G401 (cell line): ENCODE measurements at regions of chr9 and their contacts with region 1.

Region 1: DNA sequence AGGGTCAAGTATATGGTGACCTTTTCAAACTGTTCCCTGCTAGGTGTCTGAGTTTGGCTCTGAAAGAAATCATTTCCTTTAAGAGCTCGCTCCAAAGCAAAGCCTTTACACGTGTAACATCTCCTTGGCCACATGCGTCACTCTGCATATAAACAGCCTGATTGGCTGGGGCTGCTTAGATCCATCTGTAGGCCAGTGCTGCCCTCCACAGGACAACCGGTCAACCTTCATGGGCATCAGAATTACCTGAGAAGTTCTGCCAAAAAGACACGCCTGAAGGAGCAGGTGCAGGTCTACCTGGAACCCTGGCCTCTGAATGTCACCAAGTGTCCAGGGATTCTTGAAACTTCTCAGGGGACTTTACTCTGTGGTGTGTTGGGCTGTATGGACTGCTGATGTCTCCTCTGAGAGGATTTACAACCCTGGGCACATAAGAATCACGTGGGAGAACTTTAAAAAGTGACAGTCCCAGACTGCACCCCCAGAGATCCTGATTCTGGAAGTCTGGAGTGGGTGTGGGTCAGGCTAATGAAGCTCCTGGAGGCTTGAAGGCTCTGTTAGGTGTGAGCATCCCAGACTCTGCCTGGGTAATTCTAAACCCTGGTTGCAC is 497.6 kb downstream of the GADD45G start:
- DNase-seq: peak; percentile 96

Region 2: DNA sequence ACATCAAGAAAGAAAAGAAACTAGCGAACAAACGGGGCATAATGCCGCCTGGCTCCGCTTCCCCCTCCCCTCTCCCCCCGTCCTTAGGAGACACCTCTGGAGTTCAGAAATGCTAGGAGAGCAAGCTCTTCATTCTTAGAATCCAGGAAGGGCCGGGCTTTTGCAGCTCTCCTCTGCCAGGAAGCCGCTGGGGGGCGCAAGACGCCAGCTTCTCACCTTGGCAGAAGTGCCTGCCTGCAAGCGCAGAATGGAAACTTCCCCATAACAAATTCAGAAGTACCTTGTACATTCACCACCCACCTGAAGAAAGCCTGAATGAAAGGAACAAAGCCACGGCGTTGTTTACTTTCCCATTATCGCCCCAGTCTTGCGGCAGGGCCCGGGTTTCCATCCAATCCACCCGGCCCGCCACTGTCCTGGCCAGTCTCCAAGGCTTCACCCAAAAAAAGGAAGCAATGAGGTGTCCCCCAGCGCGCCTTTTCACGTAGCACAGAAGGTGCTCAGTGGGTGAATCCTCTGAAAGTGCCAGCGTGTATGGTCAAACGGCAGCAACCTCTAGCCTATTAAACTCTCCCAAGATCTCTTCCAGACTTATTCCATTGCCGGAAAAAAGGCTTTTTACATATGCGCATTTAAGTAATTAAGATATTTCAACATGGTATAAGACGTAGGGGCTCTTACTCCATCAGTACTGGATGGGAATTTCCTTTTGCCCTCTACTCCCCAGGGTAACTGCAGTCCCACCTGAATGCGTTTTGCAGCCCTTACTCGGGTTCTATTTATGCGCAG is 499.2 kb before region 1 on chr9:
- in situ Hi-C with region 1: loop called (anchors 10 kb)
- DNase-seq: peak; percentile 94

Region 3: GRCh38 chr9:90165281-90165680 is 62.9 kb after region 1 on chr9:
- in situ Hi-C with region 1: no loop called
- DNase-seq: no peak